Activated T-helper 1 cell treated with anti-CD3 and anti-CD28 coated beads, Interleukin-12 subunit alpha, Interleukin-12 subunit beta, Interleukin-2, Interleukin-4 antibody, amounts not matched to agents 30 ng/mL and 10 ng/mL and 1 ng/mL, durations not matched to agents 14 hours and 24 hours and 36 hours (primary cell): ENCODE measurements at regions of chr3 and their contacts with region 1.

Region 1: GRCh38 chr3:94004301-94004910 is 24.0 kb downstream of the STX19 start:
- DNase-seq: no peak
- H3K4me3 Mint-ChIP-seq: no peak overlapping the region
- H3K27ac Mint-ChIP-seq: no peak overlapping the region
- H3K4me1 Mint-ChIP-seq: peaks cover 12% of the 10 kb centered on the region
- H3K27me3 Mint-ChIP-seq: no peaks in the 10 kb centered on the region

Region 2: GRCh38 chr3:93979833-93980676 is 24.4 kb before region 1 on chr3 and contains the start of gene ARL13B:
- intact Hi-C with region 1: loop called (anchors 1 kb)
- DNase-seq: peak; percentile 93
- H3K4me3 Mint-ChIP-seq: peak within 1 kb of the TSS; percentile 92
- H3K27ac Mint-ChIP-seq: peak within 1 kb of the TSS; percentile 86
- H3K4me1 Mint-ChIP-seq: peaks cover 29% of the 10 kb centered on the region
- H3K27me3 Mint-ChIP-seq: peaks cover 2% of the 10 kb centered on the region
- total RNA-seq, gene ARL13B: 14.7 and 15.9 TPM in 2 replicates

Region 3: GRCh38 chr3:94028093-94028833 is 23.9 kb after region 1 on chr3 and contains the start of gene STX19:
- intact Hi-C with region 1: no loop called
- DNase-seq: no peak
- H3K4me3 Mint-ChIP-seq: no peak within 1 kb of the TSS
- H3K27ac Mint-ChIP-seq: no peak within 1 kb of the TSS
- H3K4me1 Mint-ChIP-seq: no peaks in the 10 kb centered on the region
- H3K27me3 Mint-ChIP-seq: no peaks in the 10 kb centered on the region
- total RNA-seq, gene STX19: not detected in 2 replicates

Region 4: GRCh38 chr3:94062431-94063404 is 58.3 kb after region 1 on chr3 and contains the starts of genes DHFR2 and NSUN3:
- intact Hi-C with region 1: loop called (anchors 1 kb)
- DNase-seq: peak; percentile 82
- H3K4me3 Mint-ChIP-seq: peak within 1 kb of the TSS; percentile 98
- H3K27ac Mint-ChIP-seq: peak within 1 kb of the TSS; percentile 97
- H3K4me1 Mint-ChIP-seq: peaks cover 47% of the 10 kb centered on the region
- H3K27me3 Mint-ChIP-seq: no peaks in the 10 kb centered on the region
- total RNA-seq, gene DHFR2: 10.1 and 12.3 TPM in 2 replicates
- total RNA-seq, gene NSUN3: 18.8 and 19.7 TPM in 2 replicates

Region 5: GRCh38 chr3:94069194-94069813 is 64.9 kb after region 1 on chr3:
- intact Hi-C with region 1: loop called (anchors 1 kb)
- DNase-seq: no peak
- H3K4me3 Mint-ChIP-seq: no peak overlapping the region
- H3K27ac Mint-ChIP-seq: peak overlapping the region; percentile 26
- H3K4me1 Mint-ChIP-seq: peaks cover 78% of the 10 kb centered on the region
- H3K27me3 Mint-ChIP-seq: no peaks in the 10 kb centered on the region

Region 6: GRCh38 chr3:94101851-94102250 is 97.4 kb after region 1 on chr3:
- intact Hi-C with region 1: loop called (anchors 1 kb)
- DNase-seq: no peak
- H3K4me3 Mint-ChIP-seq: no peak overlapping the region
- H3K27ac Mint-ChIP-seq: no peak overlapping the region
- H3K4me1 Mint-ChIP-seq: peaks cover 7% of the 10 kb centered on the region
- H3K27me3 Mint-ChIP-seq: no peaks in the 10 kb centered on the region

Region 7: GRCh38 chr3:94234177-94234788 is 229.9 kb after region 1 on chr3:
- intact Hi-C with region 1: loop called (anchors 1 kb)
- DNase-seq: no peak
- H3K4me3 Mint-ChIP-seq: no peak overlapping the region
- H3K27ac Mint-ChIP-seq: no peak overlapping the region
- H3K4me1 Mint-ChIP-seq: peaks cover 7% of the 10 kb centered on the region
- H3K27me3 Mint-ChIP-seq: no peaks in the 10 kb centered on the region

Region 8: DNA sequence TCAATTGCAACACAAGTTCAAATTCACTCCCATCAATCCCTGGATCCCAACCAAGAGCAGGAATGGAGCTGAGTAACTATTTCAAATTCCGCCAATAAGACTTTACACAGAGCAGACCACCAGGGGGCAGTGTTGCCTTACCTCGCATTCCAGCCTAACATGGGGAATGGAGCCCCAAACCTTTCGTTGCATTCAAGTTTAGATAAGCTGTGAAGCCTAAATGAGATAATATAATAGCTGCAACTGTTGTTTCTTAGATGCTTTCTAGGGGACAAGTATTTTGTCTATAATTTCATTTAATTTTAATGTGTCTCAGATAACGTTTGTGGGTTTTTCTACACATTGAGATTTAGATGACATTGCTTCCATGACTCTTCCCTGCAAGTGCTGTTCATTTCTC is 245.2 kb after region 1 on chr3:
- intact Hi-C with region 1: loop called (anchors 1 kb)
- DNase-seq: peak; percentile 38
- H3K4me3 Mint-ChIP-seq: no peak overlapping the region
- H3K27ac Mint-ChIP-seq: no peak overlapping the region
- H3K4me1 Mint-ChIP-seq: no peaks in the 10 kb centered on the region
- H3K27me3 Mint-ChIP-seq: peaks cover 5% of the 10 kb centered on the region